ENCODE measurements at regions of chr14 and their contacts with region 1.

Region 1: DNA sequence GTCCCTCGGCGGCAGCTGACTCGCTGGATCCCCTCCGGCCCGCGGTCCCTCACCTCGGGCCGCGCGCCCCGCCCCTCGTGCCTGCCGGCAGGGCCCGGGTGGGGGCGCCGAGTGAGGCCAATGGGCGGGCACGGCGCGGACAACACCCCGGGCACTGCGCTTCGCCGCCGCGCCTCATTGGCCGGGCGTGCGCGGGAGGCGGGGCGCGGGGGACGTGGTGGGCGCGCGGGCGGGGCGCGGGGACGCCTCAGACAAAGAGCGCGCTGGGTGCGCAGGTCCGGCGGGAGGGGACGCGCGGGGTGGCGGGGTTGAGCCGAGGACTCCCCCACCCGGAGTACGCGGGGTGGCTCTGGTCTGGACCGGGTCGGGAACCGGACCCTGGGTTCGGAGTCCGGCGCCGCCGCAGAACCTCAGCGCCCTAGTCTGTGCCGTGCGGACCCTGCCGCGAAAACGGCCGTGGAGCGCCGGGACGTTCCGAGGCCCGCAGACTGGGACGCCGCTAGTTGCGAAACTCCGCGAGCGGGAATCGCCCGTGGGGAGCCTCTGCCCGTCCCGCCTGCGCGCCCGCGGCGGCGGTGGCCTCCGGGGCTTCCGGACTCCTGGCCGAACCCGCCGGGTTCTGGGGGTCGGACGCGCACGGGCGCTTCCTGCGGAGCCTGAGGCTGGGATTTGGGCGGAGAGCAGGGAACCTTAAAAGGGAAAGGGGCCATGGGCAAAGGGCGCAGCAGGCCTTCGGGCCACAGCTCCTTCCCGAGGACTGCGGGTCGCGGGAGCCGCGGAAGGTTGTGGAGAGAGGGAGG is at the start of gene SLC25A29:
- DNase-seq: peak; percentile 91
- H3K4me3 ChIP-seq: peak within 1 kb of the TSS; percentile 57 to 89 (median 64)
- H3K27ac ChIP-seq: peak within 1 kb of the TSS; percentile 62
- H3K4me1 ChIP-seq: peaks cover 21% of the 10 kb centered on the region
- H3K27me3 ChIP-seq: no peaks in the 10 kb centered on the region
- CTCF ChIP-seq: no peak
- POLR2A ChIP-seq: peak; percentile 84
- total RNA-seq, gene SLC25A29: 108 and 132 TPM in 2 replicates

Region 2: GRCh38 chr14:100285021-100285912 is 21.4 kb before region 1 on chr14:
- CTCF ChIA-PET with region 1: interaction called, 4 read pairs
- POLR2A ChIA-PET with region 1: no interaction called
- dilution Hi-C with region 1: no loop called
- intact Hi-C with region 1: loop called (anchors 1 kb)
- DNase-seq: peak; percentile 60
- H3K4me3 ChIP-seq: peak overlapping the region; percentile 27 to 88 (median 45)
- H3K27ac ChIP-seq: peak overlapping the region; percentile 67
- H3K4me1 ChIP-seq: peaks cover 2% of the 10 kb centered on the region
- H3K27me3 ChIP-seq: no peaks in the 10 kb centered on the region
- CTCF ChIP-seq: peak; percentile 60 to 93
- POLR2A ChIP-seq: peak; percentile 10

Region 3: DNA sequence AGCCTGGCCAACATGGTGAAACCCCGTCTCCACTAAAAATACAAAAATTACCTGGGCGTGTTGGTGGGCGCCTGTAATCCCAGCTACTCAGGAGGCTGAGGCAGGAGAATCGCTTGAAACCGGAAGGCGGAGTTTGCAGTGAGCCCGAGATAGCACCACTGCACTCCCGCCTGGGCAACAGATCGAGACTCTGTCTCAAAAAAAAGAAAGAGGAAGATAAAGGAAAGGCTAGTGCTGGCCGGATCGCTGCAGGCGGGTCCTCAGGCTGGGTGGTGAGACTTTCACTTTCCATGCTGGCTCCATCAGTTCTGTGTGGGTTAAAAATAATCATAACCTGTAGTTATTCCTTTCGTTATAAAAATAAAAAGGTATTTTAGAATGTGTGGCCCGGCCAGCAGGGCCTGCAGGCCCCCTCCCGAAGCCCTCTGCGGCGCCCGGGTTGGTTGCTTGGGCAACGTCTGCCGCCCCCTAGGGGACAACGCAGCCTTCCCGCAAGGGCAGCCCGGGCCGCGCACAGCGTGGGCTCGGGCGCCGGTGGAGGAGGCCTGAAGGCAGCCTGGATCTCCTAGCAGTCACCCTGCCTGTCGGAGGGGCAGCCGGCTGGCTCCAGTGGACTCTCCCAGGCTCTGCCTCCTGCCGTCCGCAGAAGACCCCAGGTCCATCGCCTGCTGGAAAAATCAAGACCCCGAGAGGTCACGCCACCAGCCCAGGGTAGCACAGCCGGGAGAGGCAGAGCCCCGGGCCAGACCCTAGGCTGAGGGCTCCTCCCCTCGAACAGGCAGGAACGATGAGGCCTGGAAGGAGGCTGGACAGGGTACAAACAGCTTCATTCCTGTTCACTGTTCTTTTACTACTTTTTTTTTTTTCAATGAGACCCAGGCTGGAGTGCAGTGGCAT is 11.5 kb after region 1 on chr14:
- CTCF ChIA-PET with region 1: interaction called, 12 read pairs
- POLR2A ChIA-PET with region 1: no interaction called
- dilution Hi-C with region 1: no loop called
- intact Hi-C with region 1: loop called (anchors 1 kb)
- DNase-seq: peak; percentile 70
- H3K4me3 ChIP-seq: no peak overlapping the region
- H3K27ac ChIP-seq: no peak overlapping the region
- H3K4me1 ChIP-seq: no peaks in the 10 kb centered on the region
- H3K27me3 ChIP-seq: no peaks in the 10 kb centered on the region
- CTCF ChIP-seq: peak; percentile 95 to 96
- POLR2A ChIP-seq: no peak

Region 4: DNA sequence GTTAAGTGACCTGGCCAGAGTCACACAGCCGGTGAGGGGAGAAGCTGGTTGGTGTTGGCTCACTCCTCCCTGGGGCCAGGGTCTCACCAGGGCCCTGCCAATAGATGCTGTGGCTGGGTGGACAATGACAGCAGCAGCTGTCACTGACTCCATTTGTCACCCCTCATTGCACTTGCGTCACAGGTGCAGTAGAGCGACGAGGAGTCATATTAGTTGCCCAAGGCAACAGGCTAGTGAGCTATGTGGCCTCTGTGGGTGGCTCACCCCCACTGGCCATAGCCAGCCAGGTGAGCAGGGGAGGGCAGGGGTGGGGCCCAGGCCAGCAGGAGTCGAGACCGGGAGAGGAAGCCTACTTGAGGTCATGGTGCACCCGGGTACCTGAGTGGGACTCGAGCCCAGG is 26.2 kb after region 1 on chr14:
- CTCF ChIA-PET with region 1: no interaction called
- POLR2A ChIA-PET with region 1: no interaction called
- dilution Hi-C with region 1: no loop called
- intact Hi-C with region 1: no loop called
- DNase-seq: no peak
- H3K4me3 ChIP-seq: no peak overlapping the region
- H3K27ac ChIP-seq: no peak overlapping the region
- H3K4me1 ChIP-seq: no peaks in the 10 kb centered on the region
- H3K27me3 ChIP-seq: no peaks in the 10 kb centered on the region
- CTCF ChIP-seq: no peak
- POLR2A ChIP-seq: no peak

Measured in endothelial cell of umbilical vein (primary cell).